ENCODE measurements at regions of chr12 and their contacts with region 1.

Region 1: DNA sequence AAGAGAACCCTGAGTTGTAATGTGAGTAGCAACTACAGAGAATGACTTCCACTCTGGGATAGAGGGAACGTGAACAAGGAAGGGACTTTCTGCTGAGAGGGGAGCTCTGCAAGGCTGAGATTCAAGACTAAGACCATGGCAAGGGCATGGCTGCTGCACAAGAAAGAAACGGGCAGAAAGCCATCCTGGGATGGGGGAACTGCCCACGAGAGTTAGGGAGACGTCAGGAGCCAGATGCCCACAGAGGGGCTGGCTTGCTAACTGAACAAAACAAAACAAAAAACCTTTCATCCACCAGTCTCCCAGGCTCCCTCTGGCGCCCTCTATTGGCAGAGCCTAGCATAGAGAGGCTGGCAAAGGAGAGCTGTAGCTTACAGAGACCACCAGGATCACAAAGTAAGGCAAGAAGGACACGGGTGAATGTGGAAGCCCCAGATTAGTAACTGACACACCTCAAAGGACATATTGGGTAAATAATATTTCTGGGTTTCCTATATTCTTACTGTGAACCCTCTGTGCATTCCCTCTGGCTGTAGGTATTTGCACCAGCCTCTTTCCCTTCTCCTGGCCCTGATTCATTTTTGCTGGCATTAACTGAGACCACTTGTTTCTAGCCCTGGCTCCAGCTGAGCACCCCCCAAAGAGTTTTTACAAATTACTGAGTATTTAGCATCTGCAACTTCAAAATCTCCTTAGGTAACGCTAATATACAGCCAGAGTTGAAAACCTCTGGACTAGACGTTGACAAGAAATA is 338.3 kb downstream of the EMP1 start:
- DNase-seq: peak; percentile 68
- H3K4me3 ChIP-seq: no peak overlapping the region
- H3K27ac ChIP-seq: no peak overlapping the region
- H3K4me1 ChIP-seq: no peaks in the 10 kb centered on the region
- H3K27me3 ChIP-seq: peaks cover 0 to 3% of the 10 kb centered on the region in 2 experiments
- CTCF ChIP-seq: peak; percentile 89 to 98
- POLR2A ChIP-seq: no peak

Region 2: DNA sequence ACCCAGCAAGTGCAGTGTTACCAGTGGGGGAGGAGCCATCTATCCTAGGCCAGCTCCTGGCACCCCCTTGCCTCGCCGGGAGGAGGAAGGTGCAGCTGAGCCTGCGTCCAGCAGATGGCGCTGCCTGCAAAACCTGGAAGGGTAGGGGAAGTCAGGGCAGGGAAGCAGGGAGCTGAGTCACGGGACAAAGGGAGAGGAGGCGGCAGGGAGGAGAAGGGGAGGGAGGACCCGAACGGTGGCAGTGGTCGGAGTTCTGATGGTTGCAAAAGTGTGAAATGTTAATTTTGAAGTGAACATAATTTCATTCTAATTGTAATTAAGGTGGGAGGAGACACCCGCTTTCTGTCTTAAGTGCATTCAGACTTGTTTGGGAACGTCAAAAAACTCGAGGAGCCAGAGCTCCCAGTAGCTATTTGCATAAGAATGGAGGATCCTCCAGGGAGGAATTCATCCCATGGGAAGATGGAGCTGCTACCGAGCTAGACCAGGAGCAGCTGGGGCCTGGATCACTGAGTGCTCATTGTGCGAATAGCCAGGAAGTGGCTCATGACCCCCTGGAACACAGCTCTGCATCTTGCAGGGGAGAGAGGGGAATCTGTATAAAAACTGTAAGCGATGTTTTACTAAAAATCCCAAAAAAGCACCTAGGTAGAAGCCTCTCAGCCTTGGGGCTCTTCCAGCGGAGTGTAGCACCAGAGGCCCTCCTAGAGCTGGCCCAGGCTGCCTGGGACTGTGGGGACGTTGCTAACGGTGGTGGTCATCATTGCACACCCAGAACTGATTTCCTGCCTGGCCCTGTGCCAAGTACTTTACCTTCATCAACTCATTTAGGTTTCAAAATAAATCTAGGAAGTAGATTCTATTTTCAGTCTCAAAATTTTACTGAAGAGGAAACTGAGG is 278.8 kb before region 1 on chr12:
- CTCF ChIA-PET with region 1: interaction called, 55 read pairs
- POLR2A ChIA-PET with region 1: no interaction called
- dilution Hi-C with region 1: no loop called
- intact Hi-C with region 1: loop called (anchors 1 kb)
- DNase-seq: peak; percentile 96
- H3K4me3 ChIP-seq: peak overlapping the region in 2 of 3 experiments; percentile 27 to 34
- H3K27ac ChIP-seq: peak overlapping the region; percentile 2
- H3K4me1 ChIP-seq: peaks cover 17% of the 10 kb centered on the region
- H3K27me3 ChIP-seq: no peaks in the 10 kb centered on the region
- CTCF ChIP-seq: peak; percentile 98 to 100
- POLR2A ChIP-seq: no peak

Region 3: DNA sequence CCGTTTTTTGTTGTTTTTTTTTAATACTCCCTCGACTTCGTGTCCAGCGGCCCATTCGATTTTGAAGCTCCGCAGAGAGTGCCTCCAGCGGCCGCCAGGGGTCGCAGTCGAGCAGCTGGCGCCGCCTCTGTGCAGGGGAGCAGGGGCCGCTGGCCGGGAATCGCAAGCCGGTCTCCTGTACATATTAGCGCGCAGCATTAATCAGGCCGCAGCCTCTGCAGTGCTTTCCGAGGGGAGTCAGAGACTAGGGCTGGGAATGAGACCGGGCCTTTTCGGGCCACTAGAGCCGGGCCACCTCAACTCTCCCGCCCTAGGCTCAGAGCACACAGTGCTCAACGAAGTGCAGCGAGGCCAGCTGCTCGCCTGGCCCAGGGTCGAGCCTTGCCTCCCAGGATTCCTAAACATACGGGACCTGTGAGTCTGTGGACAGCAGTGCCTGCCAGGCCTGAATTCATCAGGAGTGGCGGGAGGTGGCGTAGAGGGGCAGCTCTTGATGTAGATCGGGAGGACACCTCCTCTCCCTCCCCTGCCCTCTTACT is 256.5 kb before region 1 on chr12:
- CTCF ChIA-PET with region 1: interaction called, 41 read pairs
- POLR2A ChIA-PET with region 1: no interaction called
- dilution Hi-C with region 1: no loop called
- intact Hi-C with region 1: loop called (anchors 1 kb)
- DNase-seq: peak; percentile 72
- H3K4me3 ChIP-seq: no peak overlapping the region
- H3K27ac ChIP-seq: no peak overlapping the region
- H3K4me1 ChIP-seq: no peaks in the 10 kb centered on the region
- H3K27me3 ChIP-seq: peaks cover 35 to 48% of the 10 kb centered on the region in 2 experiments
- CTCF ChIP-seq: peak; percentile 99
- POLR2A ChIP-seq: no peak

Region 4: DNA sequence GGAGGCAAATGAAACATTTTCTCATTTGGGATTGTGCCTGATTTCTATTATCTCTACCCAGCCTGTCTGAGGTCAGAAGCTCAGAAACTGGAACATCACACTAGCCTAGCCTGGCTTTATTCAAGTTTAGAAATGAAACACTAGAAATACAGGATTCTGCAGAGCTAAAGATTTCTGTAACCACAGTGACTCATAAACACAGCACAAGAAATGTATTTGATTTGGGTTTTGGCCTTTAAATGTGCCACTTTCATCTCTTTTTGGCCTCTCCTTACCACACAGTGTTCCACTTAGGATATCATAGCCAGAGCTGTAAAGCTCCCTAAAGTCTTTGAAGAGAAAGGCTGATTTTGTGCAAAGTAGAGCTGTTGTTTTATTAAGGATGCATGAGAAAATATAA is 30.7 kb before region 1 on chr12:
- CTCF ChIA-PET with region 1: interaction called, 16 read pairs
- POLR2A ChIA-PET with region 1: no interaction called
- dilution Hi-C with region 1: no loop called
- intact Hi-C with region 1: no loop called
- DNase-seq: no peak
- H3K4me3 ChIP-seq: no peak overlapping the region
- H3K27ac ChIP-seq: no peak overlapping the region
- H3K4me1 ChIP-seq: no peaks in the 10 kb centered on the region
- H3K27me3 ChIP-seq: no peaks in the 10 kb centered on the region
- CTCF ChIP-seq: no peak
- POLR2A ChIP-seq: no peak

Region 5: GRCh38 chr12:13523536-13524307 is 11.1 kb before region 1 on chr12:
- CTCF ChIA-PET with region 1: interaction called, 19 read pairs
- POLR2A ChIA-PET with region 1: no interaction called
- dilution Hi-C with region 1: no loop called
- intact Hi-C with region 1: no loop called
- DNase-seq: no peak
- H3K4me3 ChIP-seq: no peak overlapping the region
- H3K27ac ChIP-seq: no peak overlapping the region
- H3K4me1 ChIP-seq: no peaks in the 10 kb centered on the region
- H3K27me3 ChIP-seq: no peaks in the 10 kb centered on the region
- CTCF ChIP-seq: no peak
- POLR2A ChIP-seq: no peak

Region 6: DNA sequence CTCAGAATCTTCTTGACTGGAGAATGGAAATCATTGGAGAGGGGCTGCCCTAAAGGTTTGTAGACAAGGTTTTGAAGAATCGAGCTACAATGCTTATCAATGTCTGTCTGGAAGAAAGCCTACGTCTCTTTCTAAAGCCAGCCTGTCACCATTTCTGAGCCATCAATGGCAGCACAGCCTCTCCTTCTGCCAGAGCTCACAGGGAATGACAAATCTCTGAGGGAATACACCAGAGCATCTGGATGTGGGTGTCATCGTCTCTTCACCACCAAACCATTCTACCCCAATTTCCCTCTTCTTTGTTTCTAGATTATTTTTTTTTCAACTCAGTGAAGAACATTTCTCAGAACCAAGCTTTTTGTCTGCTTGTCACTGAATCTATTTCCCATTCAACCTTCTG is 11.4 kb after region 1 on chr12:
- CTCF ChIA-PET with region 1: interaction called, 53 read pairs
- POLR2A ChIA-PET with region 1: no interaction called
- dilution Hi-C with region 1: no loop called
- intact Hi-C with region 1: no loop called
- DNase-seq: no peak
- H3K4me3 ChIP-seq: no peak overlapping the region
- H3K27ac ChIP-seq: no peak overlapping the region
- H3K4me1 ChIP-seq: no peaks in the 10 kb centered on the region
- H3K27me3 ChIP-seq: no peaks in the 10 kb centered on the region
- CTCF ChIP-seq: no peak
- POLR2A ChIP-seq: no peak

Region 7: DNA sequence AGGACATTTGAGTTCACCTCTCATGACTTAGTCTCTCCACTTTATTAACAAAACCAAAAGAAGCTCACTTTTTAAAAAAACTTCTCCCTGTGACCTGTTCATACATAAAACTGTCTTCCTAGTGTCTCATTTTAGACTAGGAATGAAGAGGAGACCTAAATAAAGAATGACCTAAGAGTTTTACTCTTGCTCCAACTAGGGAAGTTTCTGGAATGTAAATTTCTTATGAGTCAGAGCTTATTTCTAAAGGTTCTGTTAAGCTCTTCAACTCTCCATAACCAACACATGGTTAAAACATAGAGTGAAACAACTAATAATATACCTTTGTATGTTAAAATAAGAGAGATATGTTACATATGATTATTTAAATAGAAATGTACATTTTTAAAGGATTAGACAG is 31.5 kb after region 1 on chr12:
- CTCF ChIA-PET with region 1: interaction called, 10 read pairs
- POLR2A ChIA-PET with region 1: no interaction called
- dilution Hi-C with region 1: no loop called
- intact Hi-C with region 1: no loop called
- DNase-seq: no peak
- H3K4me3 ChIP-seq: no peak overlapping the region
- H3K27ac ChIP-seq: no peak overlapping the region
- H3K4me1 ChIP-seq: no peaks in the 10 kb centered on the region
- H3K27me3 ChIP-seq: no peaks in the 10 kb centered on the region
- CTCF ChIP-seq: no peak
- POLR2A ChIP-seq: no peak

Region 8: DNA sequence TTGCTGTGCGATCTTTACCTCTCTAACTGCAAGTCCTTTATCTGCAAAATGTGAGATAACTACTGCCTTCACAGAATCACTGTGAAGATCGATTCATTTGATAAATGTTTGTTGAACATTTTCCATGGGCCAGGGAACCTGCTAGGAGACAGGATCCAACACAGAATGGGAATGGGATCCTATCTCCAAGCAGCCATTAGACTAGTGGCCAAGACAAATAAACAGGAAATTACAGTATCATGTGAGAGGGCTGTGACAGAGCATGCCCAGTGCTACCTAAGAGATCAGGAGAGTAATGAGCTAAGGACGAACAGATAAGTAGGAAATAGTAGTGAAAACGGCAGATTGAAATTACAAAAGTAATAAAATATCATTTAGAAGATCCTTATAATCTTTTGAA is 340.9 kb after region 1 on chr12:
- CTCF ChIA-PET with region 1: no interaction called
- POLR2A ChIA-PET with region 1: no interaction called
- dilution Hi-C with region 1: no loop called
- intact Hi-C with region 1: no loop called
- DNase-seq: no peak
- H3K4me3 ChIP-seq: no peak overlapping the region
- H3K27ac ChIP-seq: no peak overlapping the region
- H3K4me1 ChIP-seq: no peaks in the 10 kb centered on the region
- H3K27me3 ChIP-seq: no peaks in the 10 kb centered on the region
- CTCF ChIP-seq: no peak
- POLR2A ChIP-seq: no peak

Measured in endothelial cell of umbilical vein (primary cell).